ENCODE measurements at regions of chr3 and their contacts with region 1.

Region 1: DNA sequence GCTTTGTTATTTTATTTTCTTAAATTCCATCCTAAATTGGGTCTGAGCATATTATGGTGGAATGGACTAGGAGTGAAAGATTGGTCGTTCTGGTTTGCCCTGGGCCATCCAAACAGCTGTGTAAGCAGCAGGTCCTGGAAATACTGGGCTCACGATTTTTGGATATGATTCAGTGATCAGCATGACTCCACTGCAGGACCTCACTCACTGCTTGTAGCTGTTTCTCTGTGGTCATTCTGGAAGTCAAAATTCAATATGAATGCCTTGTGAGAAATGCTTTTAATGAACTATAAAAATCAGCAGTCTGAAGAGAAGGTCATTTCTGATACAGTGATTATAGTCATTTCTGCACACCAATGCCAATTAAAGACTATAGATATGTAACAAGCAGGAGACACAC is 185.0 kb downstream of the RBMS3 start:
- DNase-seq: no peak
- H3K4me3 ChIP-seq: no peak overlapping the region
- H3K27ac ChIP-seq: no peak overlapping the region
- H3K4me1 ChIP-seq: peaks cover 0 to 16% (median 8%) of the 10 kb centered on the region in 4 donors
- H3K27me3 ChIP-seq: no peaks in the 10 kb centered on the region
- CTCF ChIP-seq: no peak
- EP300 ChIP-seq: no peak
- POLR2A ChIP-seq: no peak

Region 2: DNA sequence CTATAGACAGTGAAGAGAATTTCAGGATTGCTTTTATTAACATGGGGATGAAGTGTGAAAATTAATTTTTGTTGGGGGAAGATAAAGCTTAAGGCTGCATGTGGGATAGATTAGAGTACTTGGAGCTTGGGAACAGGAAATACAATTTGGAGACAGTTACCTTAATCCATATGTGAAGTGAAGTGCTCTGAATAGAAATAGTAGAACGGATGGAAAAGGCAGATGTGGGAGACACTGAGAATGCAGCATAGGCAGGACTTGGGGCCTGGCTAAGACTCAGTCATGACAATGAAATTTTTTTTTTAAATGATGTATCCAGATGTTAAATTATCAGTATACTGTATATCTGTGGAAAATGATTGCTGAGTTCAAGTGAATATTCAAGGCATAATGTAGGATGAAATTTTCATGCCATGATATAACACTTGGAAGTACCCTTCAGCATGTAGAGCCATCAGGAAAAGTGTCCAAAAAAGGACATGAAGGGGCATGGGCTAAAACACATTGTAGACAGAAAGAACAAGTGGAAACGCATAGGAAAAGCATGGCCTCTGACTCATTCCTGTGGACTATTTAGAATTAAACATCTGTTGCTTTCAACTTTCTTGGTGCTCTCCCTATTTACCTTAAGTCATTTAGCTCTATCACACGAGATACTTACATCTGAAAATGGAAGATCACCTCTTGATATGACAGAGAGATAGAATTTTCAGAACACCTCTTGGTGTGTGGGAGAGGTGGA is 50.2 kb before region 1 on chr3:
- intact Hi-C with region 1: no loop called
- DNase-seq: no peak
- H3K4me3 ChIP-seq: no peak overlapping the region
- H3K27ac ChIP-seq: no peak overlapping the region
- H3K4me1 ChIP-seq: peaks cover 4 to 38% (median 18%) of the 10 kb centered on the region in 4 donors
- H3K27me3 ChIP-seq: no peaks in the 10 kb centered on the region
- CTCF ChIP-seq: no peak
- EP300 ChIP-seq: no peak
- POLR2A ChIP-seq: no peak

Region 3: GRCh38 chr3:29430558-29430971 is 35.3 kb before region 1 on chr3:
- intact Hi-C with region 1: loop called (anchors 5 kb)
- DNase-seq: no peak
- H3K4me3 ChIP-seq: no peak overlapping the region
- H3K27ac ChIP-seq: no peak overlapping the region
- H3K4me1 ChIP-seq: peaks cover 30 to 63% (median 55%) of the 10 kb centered on the region in 4 donors
- H3K27me3 ChIP-seq: no peaks in the 10 kb centered on the region
- CTCF ChIP-seq: no peak
- EP300 ChIP-seq: no peak
- POLR2A ChIP-seq: no peak